HEK293 (cell line): ENCODE measurements at regions of chr15 and their contacts with region 1.

Region 1: GRCh38 chr15:84748274-84749110 is at the start of gene ZNF592:
- H3K4me3 ChIP-seq: peak within 1 kb of the TSS; percentile 90
- H3K27ac ChIP-seq: peak within 1 kb of the TSS; percentile 95
- H3K4me1 ChIP-seq: peaks cover 19% of the 10 kb centered on the region
- CTCF ChIP-seq: no peak

Region 2: DNA sequence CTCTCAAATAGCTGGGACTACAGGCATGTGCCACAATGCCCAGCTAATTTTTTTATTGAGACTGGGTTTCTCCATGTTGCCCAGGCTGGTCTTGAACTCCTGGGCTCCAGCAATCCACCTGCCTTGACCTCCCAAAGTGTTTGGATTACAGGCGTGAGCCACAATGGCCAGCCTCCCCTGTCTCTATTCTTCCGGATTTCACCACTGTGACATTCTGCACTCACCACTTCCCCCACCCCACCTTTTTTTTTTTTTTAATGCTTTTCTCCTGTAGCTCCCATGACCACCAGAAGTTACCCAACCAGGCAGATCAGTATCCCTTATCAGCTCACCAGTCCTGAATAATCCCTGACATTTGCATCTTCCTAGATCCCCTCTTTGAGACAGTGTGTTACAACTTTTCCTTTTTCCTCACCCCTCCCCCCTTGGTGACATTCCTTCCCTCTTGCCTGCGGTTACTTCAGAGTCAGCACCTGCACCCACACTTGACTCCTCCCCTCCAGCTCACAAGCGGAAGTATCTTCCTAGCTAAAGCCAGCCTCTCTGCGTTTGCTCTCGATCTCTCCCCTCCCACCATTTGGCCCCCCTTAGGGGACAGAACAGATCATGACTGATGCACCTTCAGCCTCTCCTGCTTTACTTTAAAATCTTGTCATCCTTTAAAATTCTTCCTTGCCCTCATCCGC is 13.6 kb before region 1 on chr15:
- CTCF ChIA-PET with region 1: interaction called, 3 read pairs
- POLR2A ChIA-PET with region 1: interaction called, 35 read pairs
- H3K4me3 ChIP-seq: peak overlapping the region; percentile 12
- H3K27ac ChIP-seq: peak overlapping the region; percentile 33; the same call in 1 of the 2 replicates
- H3K4me1 ChIP-seq: no peaks in the 10 kb centered on the region
- CTCF ChIP-seq: no peak

Region 3: GRCh38 chr15:84773716-84774115 is 25.2 kb after region 1 on chr15:
- CTCF ChIA-PET with region 1: no interaction called
- POLR2A ChIA-PET with region 1: no interaction called
- H3K4me3 ChIP-seq: no peak overlapping the region
- H3K27ac ChIP-seq: no peak overlapping the region
- H3K4me1 ChIP-seq: no peaks in the 10 kb centered on the region
- CTCF ChIP-seq: no peak